ENCODE measurements at regions of chr5 and their contacts with region 1.

Region 1: DNA sequence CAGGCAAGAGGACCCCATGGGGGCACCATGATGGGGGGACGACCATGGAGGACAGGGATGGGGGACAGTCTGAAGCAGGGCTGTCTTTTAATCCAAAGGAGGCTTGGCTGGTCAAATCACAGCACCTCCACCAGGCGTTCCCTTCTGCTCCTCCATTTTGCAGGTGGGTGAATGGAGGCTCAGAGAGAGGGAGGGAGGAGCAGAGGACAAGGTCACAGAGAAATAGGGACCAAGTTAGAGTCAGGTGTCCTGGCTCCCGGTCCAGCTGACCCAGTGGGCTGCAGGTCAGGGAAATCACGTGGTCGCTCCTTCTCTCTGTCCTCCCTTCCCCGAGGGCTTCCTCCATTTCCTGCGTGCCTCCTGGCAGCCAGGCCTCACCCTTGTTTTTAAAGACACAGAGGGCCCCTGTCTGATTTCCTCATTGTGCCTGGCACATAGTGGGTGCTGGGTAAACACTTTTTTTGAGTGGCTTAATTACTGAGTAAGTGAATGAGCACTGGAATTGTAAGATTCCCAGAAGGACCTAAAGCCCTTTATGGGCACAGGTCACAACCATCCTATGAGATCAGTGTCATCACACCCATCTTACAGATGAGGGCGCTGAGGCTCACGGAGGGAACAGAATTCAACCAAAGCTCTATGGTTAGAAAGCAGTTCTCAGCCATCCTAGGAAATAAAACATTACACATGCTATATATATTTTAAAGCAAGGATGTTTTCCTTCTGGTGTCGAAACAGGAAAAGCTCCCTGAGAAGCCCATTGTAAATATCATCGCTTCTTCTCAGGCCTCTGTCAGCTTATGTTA is 156.2 kb upstream of the SMIM23 start:
- DNase-seq: no peak
- ATAC-seq: no peak
- H3K4me3 ChIP-seq: no peak overlapping the region
- H3K27ac ChIP-seq: no peak overlapping the region
- H3K4me1 ChIP-seq: no peaks in the 10 kb centered on the region
- H3K27me3 ChIP-seq: no peaks in the 10 kb centered on the region

Region 2: DNA sequence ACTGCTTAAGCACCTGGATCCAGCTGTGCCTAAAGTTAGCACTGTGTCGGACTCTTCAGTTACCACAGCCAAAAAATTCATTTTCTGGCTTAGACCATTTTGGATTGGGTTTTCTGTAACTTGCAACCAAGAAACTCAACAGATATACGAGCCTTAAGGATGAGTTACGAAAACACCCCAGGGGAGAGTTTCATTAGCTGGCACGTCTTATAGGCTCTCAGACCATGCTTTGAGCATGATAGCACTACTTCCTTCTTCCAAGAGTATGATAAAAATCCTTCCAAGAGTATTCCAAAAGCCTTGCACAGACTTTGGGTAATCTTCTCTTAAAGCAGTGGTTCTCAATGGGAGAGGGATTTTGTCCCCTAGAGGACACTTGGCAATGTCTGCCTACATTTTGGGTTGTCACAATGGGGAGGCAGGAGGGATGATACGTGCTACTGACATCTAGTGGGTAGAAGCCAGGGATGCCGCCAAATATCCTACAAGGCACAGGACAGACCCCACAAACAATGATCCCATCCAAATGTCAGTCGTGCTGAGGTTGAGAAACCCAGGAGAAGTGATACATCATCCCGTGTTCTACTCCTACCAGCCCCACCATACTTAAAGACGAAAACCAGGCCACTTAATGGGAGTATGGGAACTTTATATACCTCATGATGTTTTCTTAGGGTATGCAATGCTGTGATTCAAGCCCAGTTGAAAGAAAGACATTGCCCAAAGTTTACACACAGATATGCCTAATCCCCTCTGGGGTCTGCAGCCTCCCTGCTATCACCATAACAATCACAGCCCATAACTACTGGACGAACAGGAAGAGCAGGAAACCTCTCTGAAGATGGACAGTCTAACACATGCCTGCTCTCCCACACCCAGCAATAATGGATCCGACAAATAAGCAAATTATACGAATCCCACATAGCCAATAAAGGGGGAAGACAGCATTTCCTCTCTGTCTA is 221.2 kb after region 1 on chr5:
- intact Hi-C with region 1: loop called in 1 of 2 experiments (anchors 10 kb)
- DNase-seq: no peak
- ATAC-seq: peak; percentile 64
- H3K4me3 ChIP-seq: no peak overlapping the region
- H3K27ac ChIP-seq: no peak overlapping the region
- H3K4me1 ChIP-seq: no peaks in the 10 kb centered on the region
- H3K27me3 ChIP-seq: no peaks in the 10 kb centered on the region

Region 3: GRCh38 chr5:171907725-171908343 is 278.4 kb after region 1 on chr5:
- intact Hi-C with region 1: loop called in 1 of 2 experiments (anchors 2 kb)
- DNase-seq: no peak
- ATAC-seq: peak; percentile 72
- H3K4me3 ChIP-seq: no peak overlapping the region
- H3K27ac ChIP-seq: no peak overlapping the region
- H3K4me1 ChIP-seq: peaks cover 0 to 1% of the 10 kb centered on the region in 2 donors
- H3K27me3 ChIP-seq: no peaks in the 10 kb centered on the region